Motor neuron (in vitro differentiated cells): ENCODE measurements at regions of chr11 and their contacts with region 1.

Region 1: GRCh38 chr11:16613512-16614381 is 124.7 kb upstream of the C11orf58 start:
- ATAC-seq: peak; percentile 96 to 98 (median 98)
- H3K4me3 ChIP-seq: peak overlapping the region; percentile 35 to 49 (median 36)
- H3K27ac ChIP-seq: no peak overlapping the region
- H3K4me1 ChIP-seq: peaks cover 0 to 2% of the 10 kb centered on the region in 2 donors

Region 2: GRCh38 chr11:15650105-15650938 is 963.4 kb before region 1 on chr11:
- in situ Hi-C with region 1: loop called in 6 of 9 experiments (anchors 10 to 25 kb)
- ATAC-seq: peak; percentile 94 to 99 (median 96)
- H3K4me3 ChIP-seq: peak overlapping the region in 4 of 5 donors; percentile 3 to 23 (median 10)
- H3K27ac ChIP-seq: no peak overlapping the region
- H3K4me1 ChIP-seq: peaks cover 18 to 21% of the 10 kb centered on the region in 2 donors

Region 3: DNA sequence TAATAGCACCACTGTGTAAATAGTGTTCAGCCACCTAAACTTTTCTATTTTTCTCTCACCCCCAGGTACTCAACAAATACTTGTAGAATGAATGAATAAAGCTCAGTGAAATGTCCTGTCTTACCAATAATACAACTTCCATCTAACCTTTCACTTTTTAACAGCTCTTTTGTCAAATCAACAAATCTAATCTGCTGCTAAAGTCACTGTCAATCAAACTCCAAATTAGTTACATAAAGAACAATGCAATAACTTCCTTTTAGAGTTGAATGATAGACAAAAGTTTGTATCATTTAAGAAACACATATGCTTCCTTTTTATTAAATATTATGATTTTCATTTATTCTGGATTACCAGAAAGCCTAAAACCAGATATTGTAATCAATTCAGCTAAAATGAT is 90.0 kb after region 1 on chr11:
- in situ Hi-C with region 1: no loop called
- ATAC-seq: no peak
- H3K4me3 ChIP-seq: no peak overlapping the region
- H3K27ac ChIP-seq: no peak overlapping the region
- H3K4me1 ChIP-seq: no peaks in the 10 kb centered on the region

Region 4: GRCh38 chr11:16997624-16998023 is 383.9 kb after region 1 on chr11:
- in situ Hi-C with region 1: no loop called
- ATAC-seq: no peak
- H3K4me3 ChIP-seq: no peak overlapping the region
- H3K27ac ChIP-seq: no peak overlapping the region
- H3K4me1 ChIP-seq: peaks cover 0 to 2% of the 10 kb centered on the region in 2 donors